AG04449 (cell line): ENCODE measurements at regions of chr2 and their contacts with region 1.

Region 1: DNA sequence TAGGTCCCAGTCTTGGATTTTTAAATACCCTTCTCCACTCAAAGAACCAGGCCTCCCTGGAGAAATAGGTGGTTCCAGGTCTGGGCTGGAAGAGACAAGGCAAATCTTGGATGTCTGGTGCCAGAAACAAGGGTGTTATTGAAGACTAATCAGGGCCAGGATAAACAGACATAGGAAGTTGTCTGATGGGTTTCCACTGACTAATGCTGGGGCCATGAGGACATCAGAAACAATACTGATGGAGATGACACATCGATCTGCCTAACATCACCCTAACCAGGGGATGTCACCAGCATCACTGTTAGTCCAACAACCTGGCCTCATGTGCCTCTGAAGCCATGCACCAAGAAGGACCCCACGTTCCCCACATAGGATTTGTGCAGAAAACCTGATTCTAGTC is 42.5 kb upstream of the GLI2 start:
- DNase-seq: no peak
- H3K4me3 ChIP-seq: no peak overlapping the region
- CTCF ChIP-seq: no peak

Region 2: GRCh38 chr2:120669971-120670370 is 23.1 kb before region 1 on chr2:
- CTCF ChIA-PET with region 1: no interaction called
- POLR2A ChIA-PET with region 1: no interaction called
- DNase-seq: no peak
- H3K4me3 ChIP-seq: no peak overlapping the region
- CTCF ChIP-seq: no peak

Region 3: DNA sequence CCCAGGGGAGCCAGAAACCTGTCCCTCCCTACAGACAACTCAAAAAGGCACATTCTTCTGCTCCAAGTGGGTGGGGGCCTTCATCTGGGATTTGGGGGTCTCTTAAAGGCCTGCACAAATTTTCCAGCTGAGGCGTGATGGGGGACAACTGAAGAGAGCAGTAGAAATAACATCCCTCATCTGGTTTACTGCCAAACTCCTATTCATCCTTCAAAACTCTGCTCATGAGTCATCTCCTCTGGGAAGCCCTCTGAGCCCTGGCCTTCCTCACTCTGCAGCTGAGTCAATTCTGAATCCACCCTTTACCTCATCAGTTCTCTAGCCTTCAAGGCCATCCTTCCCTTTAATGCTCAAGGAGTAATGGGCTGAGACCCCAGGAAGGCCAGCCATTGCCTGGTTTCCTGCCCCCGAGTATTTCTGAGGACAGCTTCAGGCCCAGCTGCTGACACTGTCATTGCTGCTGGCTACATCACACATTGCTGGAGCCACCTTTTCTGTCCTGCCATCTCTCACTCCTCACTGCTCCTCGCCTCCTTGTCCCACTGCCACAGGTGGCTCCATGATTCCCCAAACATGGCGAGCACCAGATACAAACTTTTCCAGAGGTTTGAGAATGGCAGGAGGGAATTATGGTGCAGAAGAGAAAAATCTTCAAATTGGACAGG is 10.3 kb after region 1 on chr2:
- CTCF ChIA-PET with region 1: interaction called, 69 read pairs
- POLR2A ChIA-PET with region 1: no interaction called
- DNase-seq: no peak
- H3K4me3 ChIP-seq: no peak overlapping the region
- CTCF ChIP-seq: no peak

Region 4: DNA sequence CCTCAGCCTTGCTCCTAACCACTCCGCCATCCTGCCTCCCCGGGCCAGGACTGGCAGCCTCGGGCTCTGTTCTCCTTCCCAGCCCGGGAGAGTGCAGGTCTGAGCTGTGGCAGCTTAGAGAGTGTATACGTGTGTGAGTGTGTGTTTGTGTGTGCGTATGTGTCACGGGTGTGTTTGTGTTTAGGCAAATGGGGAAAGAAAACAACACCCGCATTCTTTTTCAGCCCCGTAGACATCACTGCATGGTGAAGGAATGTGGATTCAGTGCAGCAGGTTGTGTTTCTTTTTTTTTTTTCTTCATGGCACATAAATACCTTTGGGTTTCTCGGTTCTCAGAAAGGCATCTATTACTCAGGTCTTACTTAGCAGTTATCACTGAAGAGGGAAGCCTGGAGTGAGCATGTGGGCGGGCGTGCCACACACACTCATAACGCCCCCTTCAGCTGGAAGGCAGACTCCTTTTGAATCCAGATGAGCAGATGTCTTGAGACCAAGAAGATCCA is 86.7 kb after region 1 on chr2:
- CTCF ChIA-PET with region 1: interaction called, 14 read pairs
- POLR2A ChIA-PET with region 1: no interaction called
- DNase-seq: peak; percentile 89
- H3K4me3 ChIP-seq: no peak overlapping the region
- CTCF ChIP-seq: peak; percentile 52

Region 5: DNA sequence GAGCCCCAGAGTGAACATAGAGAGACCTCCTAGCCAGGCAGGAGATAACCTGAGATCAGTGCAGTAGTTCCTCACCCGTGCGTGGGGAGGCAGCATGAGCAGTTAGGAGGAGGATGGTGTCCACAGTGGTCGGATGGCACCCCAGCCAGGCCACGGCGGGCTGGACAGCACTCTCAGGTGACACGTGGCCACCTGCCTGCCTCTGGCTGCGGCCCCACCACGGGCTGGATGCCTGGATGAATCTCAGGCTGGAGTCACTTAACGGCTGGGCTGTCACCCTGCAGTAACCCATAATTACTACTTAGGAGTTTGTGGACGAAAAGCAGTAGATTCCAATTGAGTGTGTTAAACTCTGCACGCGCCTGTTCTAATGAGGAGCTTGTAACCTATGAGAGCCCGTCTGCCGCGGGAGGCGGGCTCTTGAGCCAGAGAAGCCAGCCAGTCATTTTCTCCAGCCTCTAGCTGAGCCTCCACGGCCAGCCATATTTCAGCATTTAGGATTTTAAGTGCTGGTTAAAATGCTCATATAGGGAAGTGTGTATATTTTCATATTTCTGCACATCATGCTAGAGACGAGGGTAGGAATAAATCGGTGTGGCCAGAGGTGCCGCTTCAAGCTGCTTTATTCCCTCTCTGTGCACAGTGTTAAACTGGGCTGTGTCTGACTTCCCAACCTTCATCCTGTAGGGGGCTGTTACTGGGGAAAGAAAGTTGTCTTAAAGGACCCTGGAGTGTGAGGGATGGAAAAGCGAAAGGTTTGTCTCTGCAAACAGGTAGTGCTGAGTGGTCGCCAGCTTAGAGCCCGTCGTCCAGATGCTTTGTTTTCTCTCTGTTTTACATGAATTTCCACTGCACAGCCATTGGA is 186.5 kb after region 1 on chr2:
- CTCF ChIA-PET with region 1: interaction called, 14 read pairs
- POLR2A ChIA-PET with region 1: no interaction called
- DNase-seq: no peak
- H3K4me3 ChIP-seq: no peak overlapping the region
- CTCF ChIP-seq: no peak

Region 6: GRCh38 chr2:120952318-120952717 is 259.2 kb after region 1 on chr2:
- CTCF ChIA-PET with region 1: interaction called, 10 read pairs
- POLR2A ChIA-PET with region 1: no interaction called
- DNase-seq: no peak
- H3K4me3 ChIP-seq: no peak overlapping the region
- CTCF ChIP-seq: no peak